Colonic mucosa (tissue), 4 donors: ENCODE measurements at regions of chr2 and their contacts with region 1.

Region 1: DNA sequence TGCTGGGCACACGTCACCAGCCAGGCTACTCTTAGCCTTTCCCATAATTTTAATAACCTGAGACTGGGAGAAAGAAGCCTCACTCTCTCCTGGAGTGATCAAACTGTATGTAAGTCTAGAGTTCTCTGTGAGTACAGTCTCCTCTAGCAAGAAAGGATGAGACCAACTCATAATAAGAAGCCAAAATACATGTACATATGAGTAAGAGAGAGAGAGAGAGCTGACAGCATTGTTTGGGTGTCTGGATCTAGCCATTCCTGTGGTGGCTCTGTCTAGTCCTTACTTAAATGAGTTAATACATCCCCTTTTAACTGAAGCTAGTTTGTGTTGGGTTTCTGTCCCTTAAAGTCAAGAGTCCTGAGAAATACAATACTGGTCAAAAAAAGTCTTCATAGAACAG is 26.0 kb upstream of the ANXA4 start:
- DNase-seq: no peak
- H3K4me3 ChIP-seq: no peak overlapping the region
- H3K27ac ChIP-seq: no peak overlapping the region
- H3K4me1 ChIP-seq: no peaks in the 10 kb centered on the region
- H3K27me3 ChIP-seq: no peaks in the 10 kb centered on the region
- CTCF ChIP-seq: no peak

Region 2: GRCh38 chr2:68994864-68995263 is 721.1 kb before region 1 on chr2:
- intact Hi-C with region 1: no loop called
- DNase-seq: no peak
- H3K4me3 ChIP-seq: no peak overlapping the region
- H3K27ac ChIP-seq: no peak overlapping the region
- H3K4me1 ChIP-seq: no peaks in the 10 kb centered on the region
- H3K27me3 ChIP-seq: no peaks in the 10 kb centered on the region
- CTCF ChIP-seq: no peak

Region 3: DNA sequence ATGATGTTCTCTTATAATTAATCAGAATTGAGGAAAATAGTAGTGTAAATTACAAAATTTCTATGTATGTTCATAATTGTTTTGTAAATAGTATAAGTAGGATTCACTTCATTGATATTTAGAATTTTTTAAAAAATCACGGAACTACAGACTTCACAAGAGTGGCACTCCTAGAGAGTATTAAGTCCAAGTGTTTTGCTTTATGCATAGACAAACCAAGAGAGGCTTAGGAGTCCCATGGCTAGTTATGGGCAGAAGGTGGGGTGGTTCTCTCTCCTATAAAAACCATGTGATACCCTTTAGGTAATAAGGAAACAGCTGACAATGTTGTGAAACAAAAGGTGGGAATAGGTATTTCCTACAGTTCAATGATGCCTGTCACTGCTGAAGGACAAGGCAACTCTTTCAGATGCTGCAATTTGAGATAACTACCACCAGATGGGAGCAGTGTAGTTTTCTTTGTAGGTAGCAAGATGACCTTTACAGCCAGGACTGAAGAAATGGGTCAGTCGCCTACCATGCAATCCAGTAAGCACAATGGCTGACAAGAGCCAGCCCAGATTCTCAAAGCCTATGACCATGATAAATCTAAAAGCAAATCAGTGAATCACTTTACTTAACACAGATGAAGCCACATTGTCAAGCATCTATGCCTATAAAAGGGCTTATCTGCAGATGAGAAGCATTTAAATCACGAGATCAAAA is 156.4 kb before region 1 on chr2:
- intact Hi-C with region 1: loop called (anchors 2 kb)
- DNase-seq: peak; percentile 56
- H3K4me3 ChIP-seq: no peak overlapping the region
- H3K27ac ChIP-seq: peak overlapping the region; percentile 34
- H3K4me1 ChIP-seq: peaks cover 14% of the 10 kb centered on the region
- H3K27me3 ChIP-seq: no peaks in the 10 kb centered on the region
- CTCF ChIP-seq: peak; percentile 55

Region 4: DNA sequence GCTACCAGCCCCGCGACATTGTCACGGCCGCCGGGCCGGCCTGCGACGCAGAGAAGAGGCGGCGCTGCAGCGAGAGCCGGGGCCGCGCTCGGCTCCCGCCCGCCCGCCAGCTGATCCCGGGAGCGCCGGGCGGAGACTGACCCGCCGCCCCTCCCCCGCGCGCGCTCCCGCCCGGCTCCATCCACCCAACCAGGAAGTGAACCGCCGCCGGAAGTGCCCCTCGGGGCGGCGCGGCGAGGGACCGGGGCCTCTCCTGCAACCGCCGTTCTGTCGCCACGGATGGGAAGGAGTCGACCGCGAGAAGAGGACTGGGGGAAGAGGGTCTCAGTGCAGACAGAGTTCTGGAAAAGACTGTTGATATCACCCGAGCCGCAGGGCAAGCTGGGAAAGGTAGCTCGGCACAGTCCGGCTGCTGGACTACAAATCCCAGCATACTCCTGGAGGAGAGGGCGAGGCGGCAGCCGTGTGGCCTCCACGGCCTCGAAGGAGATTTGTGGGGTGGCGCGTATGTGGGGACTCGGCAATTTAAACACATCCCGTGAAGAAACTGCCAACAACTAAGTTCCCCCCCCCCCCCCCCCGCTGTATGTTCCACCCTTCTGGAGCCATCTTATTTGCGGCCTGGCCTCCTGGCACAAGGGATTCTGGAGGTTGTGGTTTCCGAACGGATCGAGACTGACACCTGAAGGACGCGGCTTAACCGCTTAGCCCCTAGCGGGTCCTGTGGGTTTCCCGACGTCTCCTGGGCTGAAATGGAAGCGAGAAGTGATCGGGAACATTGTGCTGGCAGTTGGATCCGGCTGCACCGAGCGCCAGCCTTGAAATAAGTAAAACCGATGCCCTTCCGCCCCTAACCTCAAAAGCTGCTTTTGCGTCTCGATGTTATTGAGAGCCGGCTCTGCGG is 72.1 kb before region 1 on chr2 and contains the start of gene AAK1:
- intact Hi-C with region 1: loop called (anchors 5 kb)
- DNase-seq: peak; percentile 94
- H3K4me3 ChIP-seq: peak within 1 kb of the TSS; percentile 85
- H3K27ac ChIP-seq: peak within 1 kb of the TSS; percentile 95
- H3K4me1 ChIP-seq: no peaks in the 10 kb centered on the region
- H3K27me3 ChIP-seq: no peaks in the 10 kb centered on the region
- CTCF ChIP-seq: no peak
- total RNA-seq, gene AAK1: 33.5 to 41.7 TPM

Region 5: DNA sequence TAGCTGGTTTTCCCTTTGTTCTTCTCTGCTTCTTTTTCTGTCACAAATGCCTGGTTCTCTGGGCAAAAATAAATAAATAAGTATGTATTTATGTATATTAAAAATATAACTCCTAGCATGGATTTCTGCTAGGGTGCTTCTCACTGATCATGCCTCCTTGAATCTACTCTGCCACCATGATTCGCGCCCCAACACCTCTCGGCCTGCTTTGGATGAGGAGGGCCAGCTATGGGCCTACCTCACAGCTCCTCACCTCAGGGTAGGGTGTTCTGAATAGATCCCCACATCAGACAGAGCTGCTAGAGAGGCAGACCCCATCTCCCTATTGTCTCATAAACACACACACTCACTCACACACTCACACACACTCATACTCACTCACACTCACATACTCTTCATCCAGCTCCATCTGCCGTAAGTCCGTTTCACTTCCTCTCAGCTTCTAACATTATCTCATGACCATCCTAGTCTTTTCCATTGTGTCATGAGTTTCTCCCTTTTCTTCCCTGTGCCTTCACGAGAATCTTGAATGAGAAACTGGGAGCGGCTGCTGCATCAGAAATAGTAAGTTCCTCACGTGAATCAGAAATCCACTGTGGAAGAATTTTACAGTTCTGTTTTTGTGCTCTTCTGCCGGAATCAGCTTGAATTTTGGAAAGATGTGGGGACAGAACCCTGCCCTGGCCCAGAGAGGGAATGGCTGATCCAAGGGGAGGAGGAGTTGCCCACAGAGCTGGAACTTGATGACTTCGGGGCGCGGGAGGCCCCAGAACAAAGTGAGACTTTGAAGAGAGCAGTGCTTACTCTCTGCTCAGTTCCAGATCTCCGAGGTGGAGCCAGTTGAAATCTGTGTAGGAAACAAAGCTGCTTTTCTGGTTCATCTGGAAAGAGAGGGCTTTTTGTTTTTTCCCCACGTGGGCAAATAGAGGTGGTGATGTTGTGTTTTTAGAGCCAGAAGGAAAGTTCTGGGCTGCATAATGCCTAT is 46.8 kb after region 1 on chr2:
- intact Hi-C with region 1: no loop called
- DNase-seq: no peak
- H3K4me3 ChIP-seq: no peak overlapping the region
- H3K27ac ChIP-seq: peak overlapping the region; percentile 8
- H3K4me1 ChIP-seq: no peaks in the 10 kb centered on the region
- H3K27me3 ChIP-seq: no peaks in the 10 kb centered on the region
- CTCF ChIP-seq: no peak

Region 6: GRCh38 chr2:69907216-69907615 is 191.3 kb after region 1 on chr2:
- intact Hi-C with region 1: no loop called
- DNase-seq: no peak
- H3K4me3 ChIP-seq: no peak overlapping the region
- H3K27ac ChIP-seq: no peak overlapping the region
- H3K4me1 ChIP-seq: no peaks in the 10 kb centered on the region
- H3K27me3 ChIP-seq: no peaks in the 10 kb centered on the region
- CTCF ChIP-seq: no peak

Region 7: DNA sequence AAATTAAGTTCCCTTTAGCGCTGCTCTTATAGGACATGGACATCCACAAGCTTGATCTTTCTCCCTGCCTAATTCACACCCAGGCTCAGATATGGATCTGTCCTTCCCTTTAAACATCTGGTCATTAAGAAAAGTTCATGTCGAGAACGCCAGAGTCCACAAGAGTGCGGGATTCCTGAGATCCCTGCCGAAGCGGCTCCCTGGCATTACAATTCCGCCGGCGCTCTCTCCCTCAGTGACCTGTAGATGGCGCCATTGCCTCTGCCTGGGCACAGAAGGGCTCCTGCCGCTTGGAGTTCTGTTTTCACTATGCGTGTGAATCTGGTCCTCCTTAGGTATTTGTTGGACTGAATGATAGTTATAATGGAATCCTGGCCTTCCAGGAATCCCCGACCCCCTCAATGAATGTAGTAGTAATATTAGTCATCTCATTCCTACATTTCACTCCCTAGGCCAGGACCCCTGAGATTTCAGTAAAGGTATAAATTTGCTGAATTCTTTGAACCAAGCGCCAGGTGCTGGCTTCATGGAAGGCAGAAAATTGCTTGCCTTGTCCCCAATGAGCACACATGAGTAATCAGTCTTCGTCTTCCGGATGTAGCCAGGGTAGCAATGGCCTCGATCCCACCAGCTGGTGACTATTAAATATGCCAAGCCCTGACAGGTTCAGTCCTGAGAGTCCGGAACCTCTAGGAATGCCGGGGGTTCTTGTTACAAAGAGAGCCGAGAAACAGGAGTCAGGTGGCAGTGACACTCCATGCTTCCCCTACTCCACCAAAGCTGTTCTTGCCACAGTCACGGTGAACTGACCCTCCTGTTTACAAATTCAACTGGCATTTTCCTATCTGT is 1146.0 kb after region 1 on chr2:
- intact Hi-C with region 1: no loop called
- DNase-seq: peak; percentile 74
- H3K4me3 ChIP-seq: no peak overlapping the region
- H3K27ac ChIP-seq: no peak overlapping the region
- H3K4me1 ChIP-seq: no peaks in the 10 kb centered on the region
- H3K27me3 ChIP-seq: peaks cover 10% of the 10 kb centered on the region
- CTCF ChIP-seq: peak; percentile 97